Activated CD4-positive, alpha-beta memory T cell treated with anti-CD3 and anti-CD28 coated beads for 36 hours (primary cell): ENCODE measurements at regions of chr7 and their contacts with region 1.

Region 1: DNA sequence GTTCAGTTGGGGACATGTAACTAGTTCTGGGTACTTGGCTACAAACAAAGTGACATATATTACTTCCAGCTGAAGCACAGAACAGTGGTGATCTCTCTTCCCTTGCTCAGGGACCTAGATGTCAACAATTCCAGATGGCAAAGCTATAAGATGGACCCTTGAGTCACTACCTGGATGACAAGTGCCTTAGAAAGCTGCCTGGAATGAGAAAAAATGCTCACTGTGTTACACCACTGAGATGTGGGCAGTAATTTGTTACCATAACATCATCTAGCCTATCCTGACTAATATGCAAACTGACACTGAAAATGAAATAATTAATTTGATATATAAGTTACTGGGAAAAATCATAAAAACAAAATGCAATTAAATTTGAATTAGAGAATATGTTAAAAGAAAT is 16.4 kb upstream of the CTTNBP2 start:
- DNase-seq: no peak
- H3K4me3 Mint-ChIP-seq: no peak overlapping the region
- H3K27ac Mint-ChIP-seq: no peak overlapping the region
- H3K4me1 Mint-ChIP-seq: no peaks in the 10 kb centered on the region
- H3K27me3 Mint-ChIP-seq: no peaks in the 10 kb centered on the region

Region 2: DNA sequence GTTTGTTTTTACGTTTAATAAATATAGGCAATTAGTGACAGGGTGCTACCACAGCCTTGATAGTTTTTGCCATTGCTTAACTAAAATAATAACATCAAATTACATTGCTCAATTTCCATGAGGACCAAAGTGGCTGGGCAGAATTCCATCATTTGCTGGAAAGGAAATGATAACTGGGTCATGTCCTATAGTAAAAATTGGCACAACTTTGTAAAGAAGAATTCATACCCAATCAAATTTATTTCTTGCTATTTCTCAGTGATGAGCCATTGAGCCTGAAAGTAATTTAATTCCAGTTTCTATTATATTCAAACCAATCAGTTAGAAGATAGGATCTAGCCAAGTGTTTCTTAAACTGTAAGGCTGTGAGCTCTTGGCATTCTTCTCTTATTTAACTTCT is 85.9 kb after region 1 on chr7:
- CTCF ChIA-PET with region 1: no interaction called
- POLR2A ChIA-PET with region 1: no interaction called
- intact Hi-C with region 1: no loop called
- DNase-seq: no peak
- H3K4me3 Mint-ChIP-seq: no peak overlapping the region
- H3K27ac Mint-ChIP-seq: no peak overlapping the region
- H3K4me1 Mint-ChIP-seq: no peaks in the 10 kb centered on the region
- H3K27me3 Mint-ChIP-seq: no peaks in the 10 kb centered on the region

Region 3: GRCh38 chr7:118330373-118330772 is 440.8 kb after region 1 on chr7:
- CTCF ChIA-PET with region 1: no interaction called
- POLR2A ChIA-PET with region 1: no interaction called
- intact Hi-C with region 1: loop called (anchors 10 kb)
- DNase-seq: no peak
- H3K4me3 Mint-ChIP-seq: no peak overlapping the region
- H3K27ac Mint-ChIP-seq: no peak overlapping the region
- H3K4me1 Mint-ChIP-seq: no peaks in the 10 kb centered on the region
- H3K27me3 Mint-ChIP-seq: peaks cover 1% of the 10 kb centered on the region